ENCODE measurements at regions of chr20 and their contacts with region 1.

Region 1: DNA sequence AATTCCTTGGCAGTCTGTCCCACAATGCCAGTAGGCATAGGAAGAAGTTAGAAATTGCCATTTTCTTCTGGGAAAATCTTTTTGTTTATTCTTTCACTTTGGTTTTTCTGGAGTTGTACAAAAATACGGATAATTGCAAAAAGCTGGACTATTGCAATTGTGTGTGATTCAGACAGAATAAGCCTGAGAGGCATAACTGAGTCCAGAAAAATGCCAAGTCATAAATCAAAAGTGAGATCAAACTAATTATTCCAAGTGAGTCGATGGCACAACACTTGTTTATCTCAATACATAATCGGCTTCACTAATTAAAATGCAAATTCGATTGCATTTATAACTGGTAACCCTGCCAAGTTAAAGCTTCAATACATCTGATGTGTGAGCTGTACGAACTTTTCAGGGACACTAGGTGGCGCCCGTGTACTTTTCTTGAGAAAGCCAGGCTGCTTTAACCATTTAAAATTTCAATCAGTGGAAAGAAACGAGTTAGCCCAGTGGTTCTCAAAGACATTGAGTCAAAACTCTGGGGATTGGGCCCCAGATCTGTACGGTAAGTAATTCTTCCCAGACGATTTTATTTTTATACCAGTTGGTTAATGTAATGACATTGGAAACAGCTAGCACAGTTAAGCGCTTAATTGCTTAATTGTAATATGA is 102.6 kb downstream of the LAMP5 start:
- DNase-seq: peak; percentile 65 to 80
- ATAC-seq: peak; percentile 79 to 87
- H3K4me3 ChIP-seq: peak overlapping the region; percentile 39
- H3K27ac ChIP-seq: peak overlapping the region in 1 of 2 experiments; percentile 71; a peak in 4 of 6 replicates
- H3K4me1 ChIP-seq: no peaks in the 10 kb centered on the region
- CTCF ChIP-seq: peak; percentile 98
- EP300 ChIP-seq: no peak
- POLR2A ChIP-seq: no peak
- RAD21 ChIP-seq: peak; percentile 97

Region 2: GRCh38 chr20:8627340-8628004 is 989.5 kb before region 1 on chr20:
- CTCF ChIA-PET with region 1: no interaction called
- POLR2A ChIA-PET with region 1: no interaction called
- DNase-seq: no peak
- ATAC-seq: no peak
- H3K4me3 ChIP-seq: no peak overlapping the region
- H3K27ac ChIP-seq: no peak overlapping the region
- H3K4me1 ChIP-seq: no peaks in the 10 kb centered on the region
- CTCF ChIP-seq: no peak
- EP300 ChIP-seq: no peak
- POLR2A ChIP-seq: no peak
- RAD21 ChIP-seq: no peak

Region 3: GRCh38 chr20:9424551-9424950 is 192.4 kb before region 1 on chr20:
- CTCF ChIA-PET with region 1: interaction called, 11 read pairs
- POLR2A ChIA-PET with region 1: no interaction called
- DNase-seq: no peak
- ATAC-seq: no peak
- H3K4me3 ChIP-seq: no peak overlapping the region
- H3K27ac ChIP-seq: no peak overlapping the region
- H3K4me1 ChIP-seq: no peaks in the 10 kb centered on the region
- CTCF ChIP-seq: no peak
- EP300 ChIP-seq: no peak
- POLR2A ChIP-seq: no peak
- RAD21 ChIP-seq: no peak

Region 4: GRCh38 chr20:9632991-9633390 is 16.0 kb after region 1 on chr20:
- CTCF ChIA-PET with region 1: interaction called, 55 read pairs
- POLR2A ChIA-PET with region 1: no interaction called
- DNase-seq: no peak
- ATAC-seq: no peak
- H3K4me3 ChIP-seq: no peak overlapping the region
- H3K27ac ChIP-seq: no peak overlapping the region
- H3K4me1 ChIP-seq: no peaks in the 10 kb centered on the region
- CTCF ChIP-seq: no peak
- EP300 ChIP-seq: no peak
- POLR2A ChIP-seq: no peak
- RAD21 ChIP-seq: no peak

Region 5: DNA sequence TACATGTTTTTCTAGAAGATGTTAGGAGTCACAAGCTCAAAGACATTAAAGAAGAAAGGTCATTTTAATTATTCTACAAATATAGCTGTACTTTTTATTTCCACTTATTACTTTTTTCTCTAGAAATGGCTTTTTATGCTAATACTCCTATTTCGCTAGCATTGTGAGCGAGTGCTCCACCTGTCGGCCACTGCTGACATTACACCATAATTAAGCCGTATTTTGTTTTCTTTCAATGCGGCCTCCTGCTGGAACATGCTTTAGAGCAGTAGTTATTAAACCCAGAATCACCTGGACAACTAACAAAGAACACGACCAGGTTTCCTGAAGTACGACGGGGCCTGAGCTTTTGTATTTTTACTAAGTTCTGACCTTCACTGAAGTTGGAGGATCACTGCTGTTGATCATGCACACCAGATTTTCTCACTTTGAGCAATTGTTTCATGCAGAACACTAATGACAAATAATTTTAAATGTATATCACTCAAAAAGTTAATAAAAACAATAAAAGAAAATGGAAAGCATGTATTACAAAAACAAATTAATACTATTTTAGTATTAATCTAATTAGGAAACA is 296.0 kb after region 1 on chr20:
- CTCF ChIA-PET with region 1: interaction called, 66 read pairs
- POLR2A ChIA-PET with region 1: interaction called, 3 read pairs
- DNase-seq: peak; percentile 38 to 57
- ATAC-seq: peak; percentile 68 to 82; a peak in 5 of 6 replicates
- H3K4me3 ChIP-seq: no peak overlapping the region
- H3K27ac ChIP-seq: no peak overlapping the region
- H3K4me1 ChIP-seq: no peaks in the 10 kb centered on the region
- CTCF ChIP-seq: peak; percentile 85
- EP300 ChIP-seq: no peak
- POLR2A ChIP-seq: no peak
- RAD21 ChIP-seq: peak; percentile 60 to 64

Region 6: DNA sequence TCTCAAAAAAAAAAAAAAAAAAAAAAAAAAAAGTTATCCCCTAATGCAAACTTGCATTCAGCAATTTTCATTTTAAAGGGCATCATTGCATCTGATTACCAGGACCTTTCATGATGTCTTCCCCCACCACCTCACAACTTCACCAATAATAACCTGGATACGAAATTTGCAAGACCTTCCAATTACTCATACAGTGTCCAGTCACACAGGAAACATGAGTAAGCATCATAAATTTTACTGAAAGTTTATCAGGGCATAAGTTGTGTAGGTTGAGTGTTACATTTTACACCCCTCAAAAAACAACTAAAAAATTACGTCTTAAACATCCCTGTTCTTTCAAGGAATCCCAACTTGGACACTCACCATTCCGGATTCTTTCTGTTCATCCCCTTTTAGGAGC is 338.7 kb after region 1 on chr20:
- CTCF ChIA-PET with region 1: interaction called, 20 read pairs
- POLR2A ChIA-PET with region 1: no interaction called
- DNase-seq: peak in 1 of 2 experiments; percentile 17
- ATAC-seq: 0 out of 6 replicates have a peak, but pooled peaks of 1 of the 2 experiments have one; percentile 27
- H3K4me3 ChIP-seq: no peak overlapping the region
- H3K27ac ChIP-seq: no peak overlapping the region
- H3K4me1 ChIP-seq: no peaks in the 10 kb centered on the region
- CTCF ChIP-seq: no peak
- EP300 ChIP-seq: no peak
- POLR2A ChIP-seq: no peak
- RAD21 ChIP-seq: no peak

Region 7: DNA sequence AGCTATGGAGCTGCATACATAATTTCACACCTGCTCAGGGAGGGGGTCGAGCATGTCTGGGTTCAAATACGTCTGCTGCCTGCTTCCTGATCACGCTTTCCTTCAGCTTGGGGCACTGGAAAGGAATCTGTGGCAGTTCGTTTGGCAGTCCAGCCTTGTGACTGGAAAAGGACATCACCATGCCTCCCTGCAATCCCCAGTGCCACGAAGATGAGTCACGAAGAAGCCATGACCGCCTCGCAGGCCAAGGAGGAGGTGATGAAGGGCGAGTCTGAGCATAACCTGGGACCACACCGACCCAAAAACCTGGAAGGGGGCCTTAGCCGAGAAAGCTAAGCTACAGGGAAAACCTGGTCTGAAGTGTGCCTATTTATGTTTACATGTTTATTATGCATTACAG is 1043.7 kb after region 1 on chr20:
- CTCF ChIA-PET with region 1: interaction called, 12 read pairs
- POLR2A ChIA-PET with region 1: interaction called, 6 read pairs
- DNase-seq: no peak
- ATAC-seq: peak in 1 of 2 experiments; percentile 2; a peak in 1 of 6 replicates
- H3K4me3 ChIP-seq: no peak overlapping the region
- H3K27ac ChIP-seq: peak overlapping the region in 1 of 2 experiments; percentile 51; a peak in 3 of 6 replicates
- H3K4me1 ChIP-seq: peaks cover 97% of the 10 kb centered on the region
- CTCF ChIP-seq: no peak
- EP300 ChIP-seq: no peak
- POLR2A ChIP-seq: no peak
- RAD21 ChIP-seq: no peak